Activated CD4-positive, alpha-beta T cell treated with anti-CD3 and anti-CD28 coated beads, Interleukin-2, amount 10 ng/mL, durations not matched to agents 24 days and 14 days (primary cell): ENCODE measurements at regions of chr17 and their contacts with region 1.

Region 1: DNA sequence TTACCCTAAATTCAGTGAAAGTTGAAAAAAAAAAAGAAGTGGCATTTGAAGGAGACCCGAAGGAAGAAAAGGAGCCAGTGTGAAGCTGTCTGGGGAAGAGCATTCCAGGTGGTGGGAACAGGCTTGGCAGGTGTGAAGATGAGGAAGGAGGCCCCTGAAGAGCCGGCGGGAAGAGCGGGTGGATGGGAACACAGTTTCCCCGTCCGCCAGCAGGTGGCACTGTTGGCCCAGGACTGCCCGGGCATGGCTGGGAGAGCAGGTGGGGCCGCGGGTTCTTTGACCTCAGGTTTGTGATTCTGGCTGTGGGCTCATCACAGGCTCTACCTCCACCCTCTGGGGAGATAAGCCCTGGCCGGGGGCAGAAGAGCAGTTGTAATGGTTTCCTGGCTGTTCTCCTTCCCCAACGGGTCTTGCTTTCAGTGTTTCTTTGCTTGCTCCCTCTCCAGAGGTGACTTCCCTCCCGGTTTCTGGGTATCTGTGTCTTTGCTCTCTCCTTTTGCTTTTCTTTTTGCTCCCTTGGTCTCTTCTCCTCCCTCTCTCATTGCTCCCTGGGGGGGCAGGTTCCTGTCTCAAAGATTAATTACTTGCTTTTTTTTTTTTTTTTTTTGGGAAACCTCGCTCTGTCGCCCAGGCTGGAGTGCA is 32.3 kb downstream of the RAP1GAP2 start:
- DNase-seq: peak; percentile 93
- H3K4me3 Mint-ChIP-seq: peak overlapping the region; percentile 34
- H3K27ac Mint-ChIP-seq: no peak overlapping the region
- H3K4me1 Mint-ChIP-seq: peaks cover 20% of the 10 kb centered on the region
- H3K27me3 Mint-ChIP-seq: peaks cover 7% of the 10 kb centered on the region

Region 2: GRCh38 chr17:2786176-2786881 is 42.2 kb before region 1 on chr17:
- intact Hi-C with region 1: loop called (anchors 5 kb)
- DNase-seq: peak; percentile 98
- H3K4me3 Mint-ChIP-seq: no peak overlapping the region
- H3K27ac Mint-ChIP-seq: no peak overlapping the region
- H3K4me1 Mint-ChIP-seq: peaks cover 7% of the 10 kb centered on the region
- H3K27me3 Mint-ChIP-seq: peaks cover 8% of the 10 kb centered on the region

Region 3: DNA sequence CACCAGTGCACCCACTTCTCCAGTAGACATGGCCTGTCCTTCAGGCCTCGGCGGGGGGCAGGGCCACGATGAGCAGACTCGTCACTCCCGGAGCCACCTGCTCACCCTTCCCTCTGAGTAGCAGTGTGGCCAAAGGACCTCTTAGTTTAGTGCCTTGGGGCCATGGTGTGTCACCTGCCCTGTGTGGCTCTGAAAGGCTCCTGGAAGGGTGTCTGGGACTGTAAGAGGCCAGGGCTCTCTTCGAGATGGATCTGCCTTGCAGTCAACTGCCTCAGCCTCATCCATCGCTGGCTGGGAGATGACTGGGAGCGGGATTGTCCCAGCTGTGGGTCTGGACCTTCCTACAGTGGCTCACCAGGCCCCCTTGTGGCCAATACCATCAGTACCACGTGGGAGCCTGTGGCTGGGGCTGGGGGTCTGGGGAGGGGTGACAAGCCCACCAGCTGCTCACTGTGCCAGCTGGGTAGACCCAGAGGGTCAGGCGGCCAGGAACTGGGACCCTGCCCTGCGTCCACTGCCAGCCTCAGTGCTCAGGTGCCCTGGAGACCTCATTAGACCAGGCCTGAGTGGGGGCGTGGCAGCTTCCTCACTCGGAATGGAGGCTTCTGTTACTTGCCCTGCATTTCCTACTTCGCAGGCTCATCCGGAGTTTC is 101.5 kb after region 1 on chr17:
- intact Hi-C with region 1: loop called (anchors 2 kb)
- DNase-seq: peak; percentile 72
- H3K4me3 Mint-ChIP-seq: no peak overlapping the region
- H3K27ac Mint-ChIP-seq: no peak overlapping the region
- H3K4me1 Mint-ChIP-seq: peaks cover 2% of the 10 kb centered on the region
- H3K27me3 Mint-ChIP-seq: no peaks in the 10 kb centered on the region

Region 4: DNA sequence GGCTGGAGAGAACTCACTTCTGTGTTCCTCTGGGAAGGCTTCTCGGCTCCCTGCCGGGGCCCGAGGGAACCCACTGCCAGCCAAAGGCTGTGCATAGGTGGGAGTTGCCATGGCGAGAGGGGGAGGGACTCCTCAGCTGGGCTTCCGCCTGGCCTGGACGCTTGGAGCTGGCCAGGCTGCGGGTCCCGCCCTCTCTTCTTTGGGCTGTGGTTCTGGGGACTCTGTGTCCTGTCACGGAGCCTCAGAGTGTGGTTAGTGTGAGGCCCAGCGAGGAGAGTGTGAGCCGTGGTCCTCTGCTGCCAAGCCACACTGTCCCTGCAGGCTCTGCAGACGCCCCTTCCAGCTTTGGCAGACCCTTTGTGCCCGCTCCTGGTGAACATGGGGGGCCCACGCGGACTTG is 111.8 kb after region 1 on chr17:
- intact Hi-C with region 1: no loop called
- DNase-seq: no peak
- H3K4me3 Mint-ChIP-seq: no peak overlapping the region
- H3K27ac Mint-ChIP-seq: no peak overlapping the region
- H3K4me1 Mint-ChIP-seq: peaks cover 4% of the 10 kb centered on the region
- H3K27me3 Mint-ChIP-seq: peaks cover 14% of the 10 kb centered on the region

Region 5: DNA sequence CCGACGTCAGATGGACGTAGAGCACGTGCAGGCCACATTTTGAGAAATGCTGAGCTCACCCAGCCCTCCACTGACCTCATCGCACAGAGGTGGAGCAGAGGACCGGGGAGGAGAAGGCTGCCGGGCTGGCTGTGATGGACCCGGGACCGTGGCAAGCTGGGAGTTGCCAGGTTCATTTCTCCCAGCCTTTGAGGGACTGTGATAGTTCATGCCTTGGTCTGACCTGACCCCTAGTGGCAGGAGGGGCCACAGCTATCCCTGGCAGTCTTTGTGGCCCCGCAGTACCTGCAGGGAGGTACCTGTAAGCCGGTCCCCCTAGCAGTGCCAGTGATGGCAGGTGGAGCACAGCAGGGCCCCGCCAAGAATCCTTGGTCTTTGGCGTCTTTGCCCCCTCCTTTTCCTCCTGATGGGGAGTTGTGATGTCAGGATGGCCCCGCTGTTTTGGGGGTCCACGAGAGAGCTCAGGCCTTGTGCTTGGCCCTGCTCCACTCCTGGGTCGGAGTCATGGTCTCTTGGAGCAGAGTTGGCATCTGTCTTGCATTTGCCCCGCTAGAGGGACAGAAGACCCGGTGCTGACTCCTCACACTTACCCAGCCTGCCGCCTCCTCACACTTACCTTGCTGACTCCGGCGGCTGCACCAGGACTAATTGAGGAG is 184.5 kb after region 1 on chr17:
- intact Hi-C with region 1: loop called (anchors 2 kb)
- DNase-seq: peak; percentile 83
- H3K4me3 Mint-ChIP-seq: no peak overlapping the region
- H3K27ac Mint-ChIP-seq: no peak overlapping the region
- H3K4me1 Mint-ChIP-seq: no peaks in the 10 kb centered on the region
- H3K27me3 Mint-ChIP-seq: no peaks in the 10 kb centered on the region

Region 6: GRCh38 chr17:3474212-3474611 is 645.7 kb after region 1 on chr17:
- intact Hi-C with region 1: no loop called
- DNase-seq: no peak
- H3K4me3 Mint-ChIP-seq: no peak overlapping the region
- H3K27ac Mint-ChIP-seq: no peak overlapping the region
- H3K4me1 Mint-ChIP-seq: peaks cover 5% of the 10 kb centered on the region
- H3K27me3 Mint-ChIP-seq: peaks cover 7% of the 10 kb centered on the region